CD4-positive, alpha-beta T cell (primary cell): ENCODE measurements at regions of chr2 and their contacts with region 1.

Region 1: GRCh38 chr2:9630749-9631483 is at the start of gene YWHAQ:
- DNase-seq: peak; percentile 93 to 99 (median 96)
- ATAC-seq: peak; percentile 85
- H3K4me3 ChIP-seq: peak within 1 kb of the TSS; percentile 93
- H3K4me3 Mint-ChIP-seq: peak within 1 kb of the TSS; percentile 98
- H3K27ac ChIP-seq: peak within 1 kb of the TSS; percentile 77 to 81
- H3K27ac Mint-ChIP-seq: peak within 1 kb of the TSS; percentile 96
- H3K4me1 ChIP-seq: peaks cover 42% of the 10 kb centered on the region
- H3K4me1 Mint-ChIP-seq: peaks cover 56% of the 10 kb centered on the region
- H3K27me3 ChIP-seq: no peaks in the 10 kb centered on the region
- H3K27me3 Mint-ChIP-seq: no peaks in the 10 kb centered on the region
- CTCF ChIP-seq: no peak
- total RNA-seq, gene YWHAQ: 95.8 to 101 TPM

Region 2: DNA sequence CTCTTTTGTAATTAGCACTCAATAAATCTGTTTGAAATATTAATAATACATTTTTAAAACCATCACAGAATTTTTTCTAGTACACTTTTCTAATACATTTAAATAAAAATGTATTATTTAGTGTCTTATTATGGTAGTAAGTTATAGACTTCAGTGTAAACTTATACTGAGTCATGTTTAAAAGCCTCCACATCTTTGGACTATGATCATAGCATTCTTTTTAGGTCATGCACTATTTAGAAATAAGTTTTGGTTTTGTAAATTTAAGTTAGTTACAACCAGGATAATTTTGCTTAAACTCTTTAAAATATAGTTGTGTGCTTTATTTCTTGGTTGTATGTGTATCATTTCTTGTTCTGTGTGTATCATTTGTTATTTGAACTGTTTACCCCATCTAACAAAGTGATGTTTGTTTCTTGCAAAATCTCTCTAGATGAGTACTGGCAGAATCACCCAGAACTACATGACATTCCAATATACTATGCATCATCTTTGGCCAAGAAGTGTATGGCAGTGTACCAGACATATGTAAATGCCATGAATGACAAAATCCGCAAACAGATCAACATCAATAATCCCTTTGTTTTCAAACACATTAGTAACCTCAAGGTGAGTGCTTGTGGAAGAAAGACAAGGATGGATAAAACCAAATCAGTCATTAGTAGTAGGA is 190.7 kb before region 1 on chr2:
- CTCF ChIA-PET with region 1: no interaction called
- POLR2A ChIA-PET with region 1: no interaction called
- intact Hi-C with region 1: no loop called
- DNase-seq: no peak
- ATAC-seq: no peak
- H3K4me3 ChIP-seq: no peak overlapping the region
- H3K4me3 Mint-ChIP-seq: no peak overlapping the region
- H3K27ac ChIP-seq: no peak overlapping the region
- H3K27ac Mint-ChIP-seq: peak overlapping the region; percentile 40
- H3K4me1 ChIP-seq: no peaks in the 10 kb centered on the region
- H3K4me1 Mint-ChIP-seq: peaks cover 5% of the 10 kb centered on the region
- H3K27me3 ChIP-seq: no peaks in the 10 kb centered on the region
- H3K27me3 Mint-ChIP-seq: no peaks in the 10 kb centered on the region
- CTCF ChIP-seq: no peak

Region 3: DNA sequence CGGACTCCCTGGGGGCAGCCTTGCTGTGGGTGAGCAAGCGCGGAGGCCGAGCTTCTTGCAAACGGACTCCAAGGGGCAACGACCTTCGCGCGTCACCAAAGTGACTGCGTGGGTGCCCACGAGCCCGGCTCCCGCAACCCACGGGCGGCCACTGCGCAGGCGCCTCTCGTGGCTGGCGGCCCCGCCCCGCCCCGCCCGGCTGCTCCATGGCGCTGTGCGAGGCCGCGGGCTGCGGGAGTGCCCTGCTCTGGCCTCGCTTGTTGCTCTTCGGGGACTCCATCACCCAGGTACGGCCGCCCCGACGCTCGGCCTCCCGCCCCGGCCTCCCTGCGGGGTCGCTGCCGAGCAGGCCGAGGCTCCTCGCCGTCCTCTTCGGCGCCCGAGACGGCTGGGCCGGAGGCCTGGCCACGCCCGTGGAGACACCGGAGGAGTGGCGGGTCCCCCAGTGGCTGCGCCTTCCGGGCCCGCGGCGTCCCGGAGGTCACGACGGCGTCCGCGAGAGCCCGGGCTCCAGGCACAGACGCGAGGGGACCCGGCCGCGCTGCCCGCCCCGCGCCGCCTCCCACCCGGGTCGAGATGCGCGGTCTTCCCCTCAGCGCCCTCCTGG is 156.5 kb before region 1 on chr2 and contains the start of gene IAH1:
- CTCF ChIA-PET with region 1: no interaction called
- POLR2A ChIA-PET with region 1: interaction called, 7 read pairs
- intact Hi-C with region 1: loop called (anchors 2 to 10 kb)
- DNase-seq: peak; percentile 54 to 90 (median 75)
- ATAC-seq: peak; percentile 81
- H3K4me3 ChIP-seq: peak within 1 kb of the TSS; percentile 82
- H3K4me3 Mint-ChIP-seq: peak within 1 kb of the TSS; percentile 88
- H3K27ac ChIP-seq: peak within 1 kb of the TSS; percentile 90
- H3K27ac Mint-ChIP-seq: peak within 1 kb of the TSS; percentile 92
- H3K4me1 ChIP-seq: peaks cover 37% of the 10 kb centered on the region
- H3K4me1 Mint-ChIP-seq: peaks cover 59% of the 10 kb centered on the region
- H3K27me3 ChIP-seq: no peaks in the 10 kb centered on the region
- H3K27me3 Mint-ChIP-seq: no peaks in the 10 kb centered on the region
- CTCF ChIP-seq: no peak
- total RNA-seq, gene IAH1: 54.8 to 57.3 TPM

Region 4: DNA sequence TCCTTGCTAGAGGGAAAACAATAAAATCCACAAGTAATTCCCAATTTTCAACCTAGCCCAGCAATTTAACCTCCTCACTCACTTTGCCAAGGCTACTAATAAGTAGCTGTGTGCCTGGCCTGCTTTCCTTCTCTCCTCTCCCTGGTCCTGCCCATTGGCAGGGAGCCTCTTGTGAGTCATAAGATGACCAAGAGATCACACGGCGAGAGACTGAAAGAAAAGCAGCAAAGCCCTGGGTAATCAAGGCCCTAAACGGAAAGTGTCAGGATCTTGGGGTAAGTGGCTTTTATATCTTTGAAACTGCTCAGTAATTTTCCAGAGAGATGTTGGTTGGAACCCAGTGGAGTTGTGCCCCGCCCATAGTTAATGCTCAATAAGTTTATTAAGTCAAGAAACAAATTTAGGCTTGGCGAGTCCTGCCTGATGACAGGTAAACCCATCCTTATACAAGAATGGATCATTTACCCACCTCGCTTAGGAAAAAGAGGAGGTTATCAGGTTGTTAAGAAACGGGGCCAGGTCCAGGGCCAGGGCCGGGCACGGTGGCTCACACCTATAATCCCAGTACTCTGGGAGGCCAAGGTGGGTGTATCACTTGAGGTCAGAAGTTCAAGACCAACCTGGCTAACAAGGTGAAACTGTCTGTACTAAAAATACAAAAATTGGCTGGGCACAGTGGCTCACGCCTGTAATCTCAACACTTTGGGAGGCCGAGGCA is 65.3 kb before region 1 on chr2:
- CTCF ChIA-PET with region 1: no interaction called
- POLR2A ChIA-PET with region 1: no interaction called
- intact Hi-C with region 1: no loop called
- DNase-seq: no peak
- ATAC-seq: no peak
- H3K4me3 ChIP-seq: no peak overlapping the region
- H3K4me3 Mint-ChIP-seq: no peak overlapping the region
- H3K27ac ChIP-seq: no peak overlapping the region
- H3K27ac Mint-ChIP-seq: no peak overlapping the region
- H3K4me1 ChIP-seq: no peaks in the 10 kb centered on the region
- H3K4me1 Mint-ChIP-seq: no peaks in the 10 kb centered on the region
- H3K27me3 ChIP-seq: no peaks in the 10 kb centered on the region
- H3K27me3 Mint-ChIP-seq: no peaks in the 10 kb centered on the region
- CTCF ChIP-seq: no peak

Region 5: DNA sequence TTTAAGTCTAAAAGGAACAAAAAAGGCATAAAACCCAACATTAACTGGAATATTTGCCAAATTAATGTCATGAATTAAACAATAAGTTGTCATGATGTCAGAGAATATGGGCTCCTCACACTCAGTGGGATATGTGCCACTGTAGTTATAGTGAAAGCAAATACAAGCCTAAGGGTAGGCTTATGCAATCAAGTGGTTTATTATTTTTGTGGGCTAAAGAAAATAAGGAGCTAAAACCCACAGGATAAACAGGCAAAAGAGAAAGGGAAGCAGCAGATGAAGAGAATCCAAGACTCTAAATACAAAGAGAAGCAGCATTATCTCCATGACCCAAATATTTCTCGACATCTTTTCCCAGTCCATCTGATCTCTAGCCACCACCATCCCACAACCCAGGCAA is 17.6 kb before region 1 on chr2:
- CTCF ChIA-PET with region 1: interaction called, 3 read pairs
- POLR2A ChIA-PET with region 1: interaction called, 34 read pairs
- intact Hi-C with region 1: loop called in 1 of 2 experiments (anchors 2 kb)
- DNase-seq: no peak
- ATAC-seq: no peak
- H3K4me3 ChIP-seq: no peak overlapping the region
- H3K4me3 Mint-ChIP-seq: no peak overlapping the region
- H3K27ac ChIP-seq: no peak overlapping the region
- H3K27ac Mint-ChIP-seq: no peak overlapping the region
- H3K4me1 ChIP-seq: peaks cover 17% of the 10 kb centered on the region
- H3K4me1 Mint-ChIP-seq: peaks cover 96% of the 10 kb centered on the region
- H3K27me3 ChIP-seq: no peaks in the 10 kb centered on the region
- H3K27me3 Mint-ChIP-seq: no peaks in the 10 kb centered on the region
- CTCF ChIP-seq: no peak

Region 6: GRCh38 chr2:9739531-9739964 is 108.6 kb after region 1 on chr2:
- CTCF ChIA-PET with region 1: no interaction called
- POLR2A ChIA-PET with region 1: interaction called, 10 read pairs
- intact Hi-C with region 1: loop called in 1 of 2 experiments (anchors 5 kb)
- DNase-seq: peak; percentile 22 to 77 (median 52)
- ATAC-seq: peak; percentile 80
- H3K4me3 ChIP-seq: peak overlapping the region; percentile 42
- H3K4me3 Mint-ChIP-seq: peak overlapping the region; percentile 89
- H3K27ac ChIP-seq: peak overlapping the region in 1 of 2 donors; percentile 67
- H3K27ac Mint-ChIP-seq: peak overlapping the region; percentile 90
- H3K4me1 ChIP-seq: peaks cover 46% of the 10 kb centered on the region
- H3K4me1 Mint-ChIP-seq: peaks cover 49% of the 10 kb centered on the region
- H3K27me3 ChIP-seq: no peaks in the 10 kb centered on the region
- H3K27me3 Mint-ChIP-seq: no peaks in the 10 kb centered on the region
- CTCF ChIP-seq: no peak

Region 7: DNA sequence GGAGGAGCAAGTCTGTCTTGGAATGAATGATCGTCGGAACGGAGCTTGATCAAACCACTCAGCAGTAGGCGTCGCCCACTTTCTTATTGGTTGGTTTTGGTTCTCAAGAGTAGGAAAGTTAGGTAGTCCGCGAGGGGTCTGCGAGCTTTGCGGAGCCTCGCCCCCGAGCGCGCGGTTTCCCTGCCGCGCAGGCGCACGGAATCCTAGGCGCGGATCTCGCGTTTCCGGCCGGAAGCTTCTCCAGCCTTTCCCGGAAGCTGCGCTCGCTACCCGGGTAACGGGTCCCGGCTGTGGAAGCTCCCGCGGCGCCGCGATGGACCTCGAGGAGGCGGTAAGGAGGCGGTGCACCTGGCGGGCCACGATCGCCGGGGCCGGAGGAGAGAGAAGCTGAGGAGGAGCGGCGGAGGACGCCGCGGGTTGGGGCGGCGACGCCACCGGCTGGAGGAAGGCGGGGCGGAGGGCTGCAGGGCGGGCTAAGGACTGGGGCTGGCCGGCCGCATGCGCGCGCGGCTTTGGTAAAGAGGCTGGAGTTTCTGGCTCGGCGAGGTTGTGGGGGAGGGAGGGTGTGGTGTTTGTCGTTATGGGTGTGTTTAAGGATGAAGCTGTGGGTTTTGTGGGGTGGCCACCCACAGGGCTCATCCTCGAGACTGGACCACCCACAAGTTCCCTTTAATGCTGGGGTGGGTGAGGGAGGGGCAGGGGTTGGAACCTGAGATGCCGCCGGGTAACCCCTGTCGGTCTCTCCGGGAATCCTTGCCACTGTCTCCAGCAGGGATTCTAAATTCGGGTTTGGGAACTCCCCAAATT is 212.5 kb after region 1 on chr2 and contains the start of gene TAF1B:
- CTCF ChIA-PET with region 1: no interaction called
- POLR2A ChIA-PET with region 1: interaction called, 7 read pairs
- intact Hi-C with region 1: loop called in 1 of 2 experiments (anchors 5 kb)
- DNase-seq: peak; percentile 55 to 93 (median 76)
- ATAC-seq: peak; percentile 82
- H3K4me3 ChIP-seq: peak within 1 kb of the TSS; percentile 93
- H3K4me3 Mint-ChIP-seq: peak within 1 kb of the TSS; percentile 93
- H3K27ac ChIP-seq: peak within 1 kb of the TSS; percentile 66 to 75
- H3K27ac Mint-ChIP-seq: peak within 1 kb of the TSS; percentile 90
- H3K4me1 ChIP-seq: peaks cover 19% of the 10 kb centered on the region
- H3K4me1 Mint-ChIP-seq: peaks cover 50% of the 10 kb centered on the region
- H3K27me3 ChIP-seq: no peaks in the 10 kb centered on the region
- H3K27me3 Mint-ChIP-seq: no peaks in the 10 kb centered on the region
- CTCF ChIP-seq: no peak
- total RNA-seq, gene TAF1B: 9.9 to 10.8 TPM